CD4-positive, alpha-beta memory T cell (primary cell): ENCODE measurements at regions of chr3 and their contacts with region 1.

Region 1: GRCh38 chr3:31550452-31551251 is 17.9 kb downstream of the STT3B start:
- DNase-seq: peak in 4 of 5 donors; percentile 28 to 40 (median 37)
- H3K4me3 ChIP-seq: no peak overlapping the region
- H3K4me3 Mint-ChIP-seq: peak overlapping the region; percentile 6 to 66 (median 46)
- H3K27ac ChIP-seq: no peak overlapping the region
- H3K27ac Mint-ChIP-seq: peak overlapping the region in 4 of 7 donors; percentile 37 to 85 (median 43)
- H3K4me1 ChIP-seq: peaks cover 84% of the 10 kb centered on the region
- H3K4me1 Mint-ChIP-seq: peaks cover 68 to 93% (median 81%) of the 10 kb centered on the region in 4 donors
- H3K27me3 ChIP-seq: no peaks in the 10 kb centered on the region
- H3K27me3 Mint-ChIP-seq: no peaks in the 10 kb centered on the region

Region 2: GRCh38 chr3:31567036-31567435 is 16.4 kb after region 1 on chr3:
- CTCF ChIA-PET with region 1: interaction called, 4 read pairs
- POLR2A ChIA-PET with region 1: no interaction called
- intact Hi-C with region 1: loop called (anchors 2 kb)
- DNase-seq: peak in 3 of 5 donors; percentile 19 to 43 (median 25)
- H3K4me3 ChIP-seq: no peak overlapping the region
- H3K4me3 Mint-ChIP-seq: peak overlapping the region in 7 of 8 donors; percentile 1 to 72 (median 54)
- H3K27ac ChIP-seq: no peak overlapping the region
- H3K27ac Mint-ChIP-seq: peak overlapping the region in 4 of 7 donors; percentile 11 to 61 (median 38)
- H3K4me1 ChIP-seq: peaks cover 92% of the 10 kb centered on the region
- H3K4me1 Mint-ChIP-seq: peaks cover 72 to 90% (median 83%) of the 10 kb centered on the region in 4 donors
- H3K27me3 ChIP-seq: no peaks in the 10 kb centered on the region
- H3K27me3 Mint-ChIP-seq: no peaks in the 10 kb centered on the region

Region 3: DNA sequence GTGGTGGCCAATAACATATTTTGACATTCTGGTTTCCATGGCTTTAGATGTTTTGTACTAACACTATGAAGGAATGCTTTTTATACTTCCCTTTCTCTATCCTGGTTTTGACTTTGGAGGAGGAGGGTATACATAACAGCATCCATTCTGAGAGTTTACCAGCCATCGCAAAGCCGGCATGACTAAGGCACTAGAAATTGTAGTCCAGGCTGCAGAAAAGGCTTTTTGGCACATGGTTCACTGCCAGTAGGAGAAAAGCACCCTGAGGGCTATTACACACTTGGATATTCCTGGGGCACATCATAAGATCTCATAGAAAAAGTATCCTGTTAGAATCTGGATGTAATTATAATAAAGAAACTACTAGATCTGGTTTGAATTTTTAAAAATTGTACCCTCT is 83.8 kb after region 1 on chr3:
- CTCF ChIA-PET with region 1: no interaction called
- POLR2A ChIA-PET with region 1: no interaction called
- intact Hi-C with region 1: loop called (anchors 5 kb)
- DNase-seq: no peak
- H3K4me3 ChIP-seq: no peak overlapping the region
- H3K4me3 Mint-ChIP-seq: peak overlapping the region in 3 of 8 donors; percentile 30 to 50 (median 50)
- H3K27ac ChIP-seq: no peak overlapping the region
- H3K27ac Mint-ChIP-seq: peak overlapping the region in 6 of 7 donors; percentile 1 to 86 (median 48)
- H3K4me1 ChIP-seq: peaks cover 47% of the 10 kb centered on the region
- H3K4me1 Mint-ChIP-seq: peaks cover 43 to 71% (median 51%) of the 10 kb centered on the region in 4 donors
- H3K27me3 ChIP-seq: no peaks in the 10 kb centered on the region
- H3K27me3 Mint-ChIP-seq: no peaks in the 10 kb centered on the region

Region 4: GRCh38 chr3:31695280-31696008 is 144.8 kb after region 1 on chr3:
- CTCF ChIA-PET with region 1: interaction called, 5 read pairs
- POLR2A ChIA-PET with region 1: no interaction called
- intact Hi-C with region 1: loop called (anchors 2 kb)
- DNase-seq: peak in 4 of 5 donors; percentile 13 to 27 (median 16)
- H3K4me3 ChIP-seq: no peak overlapping the region
- H3K4me3 Mint-ChIP-seq: no peak overlapping the region
- H3K27ac ChIP-seq: no peak overlapping the region
- H3K27ac Mint-ChIP-seq: no peak overlapping the region
- H3K4me1 ChIP-seq: no peaks in the 10 kb centered on the region
- H3K4me1 Mint-ChIP-seq: no peaks in the 10 kb centered on the region
- H3K27me3 ChIP-seq: no peaks in the 10 kb centered on the region
- H3K27me3 Mint-ChIP-seq: no peaks in the 10 kb centered on the region

Region 5: DNA sequence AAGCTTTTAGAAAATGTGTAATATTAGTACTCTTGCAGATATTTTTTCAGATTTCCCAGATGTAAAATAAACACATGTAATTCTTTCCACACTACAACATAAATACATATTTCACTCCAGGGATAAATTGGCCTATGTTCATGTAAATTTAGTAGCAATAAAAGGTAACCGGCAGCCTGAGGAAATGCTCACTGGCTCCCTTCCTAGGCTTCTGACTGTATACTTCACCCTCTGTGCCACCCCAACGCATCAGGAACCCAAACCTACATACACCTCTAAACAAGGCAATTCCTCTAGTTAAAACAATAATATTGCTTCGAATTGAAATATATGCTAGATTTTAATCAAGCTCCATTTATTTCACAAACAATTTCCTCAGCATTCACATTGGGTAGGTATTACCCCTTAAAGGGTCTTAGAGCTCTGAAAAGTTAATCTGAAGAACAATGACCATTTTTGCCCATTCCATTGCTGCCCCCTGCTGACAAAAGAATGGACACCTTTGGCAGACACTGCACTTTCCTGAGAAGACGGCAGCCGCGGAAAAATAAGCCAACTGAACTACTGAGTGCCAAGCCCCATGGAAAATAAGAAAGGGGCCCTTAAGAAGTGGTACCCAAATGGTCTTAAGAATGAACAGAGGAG is 217.9 kb after region 1 on chr3:
- CTCF ChIA-PET with region 1: interaction called, 7 read pairs
- POLR2A ChIA-PET with region 1: no interaction called
- intact Hi-C with region 1: loop called (anchors 1 kb)
- DNase-seq: peak in 4 of 5 donors; percentile 31 to 43 (median 38)
- H3K4me3 ChIP-seq: no peak overlapping the region
- H3K4me3 Mint-ChIP-seq: peak overlapping the region in 1 of 8 donors; percentile 49
- H3K27ac ChIP-seq: no peak overlapping the region
- H3K27ac Mint-ChIP-seq: no peak overlapping the region
- H3K4me1 ChIP-seq: no peaks in the 10 kb centered on the region
- H3K4me1 Mint-ChIP-seq: peaks cover 0 to 2% (median under 1%) of the 10 kb centered on the region in 4 donors
- H3K27me3 ChIP-seq: no peaks in the 10 kb centered on the region
- H3K27me3 Mint-ChIP-seq: peaks cover 0 to 1% of the 10 kb centered on the region in 2 donors

Region 6: GRCh38 chr3:32143849-32144757 is 593.5 kb after region 1 on chr3:
- CTCF ChIA-PET with region 1: no interaction called
- POLR2A ChIA-PET with region 1: no interaction called
- intact Hi-C with region 1: loop called (anchors 10 kb)
- DNase-seq: peak; percentile 46 to 58 (median 56)
- H3K4me3 ChIP-seq: no peak overlapping the region
- H3K4me3 Mint-ChIP-seq: no peak overlapping the region
- H3K27ac ChIP-seq: no peak overlapping the region
- H3K27ac Mint-ChIP-seq: peak overlapping the region in 1 of 7 donors; percentile 3
- H3K4me1 ChIP-seq: no peaks in the 10 kb centered on the region
- H3K4me1 Mint-ChIP-seq: peaks cover 1 to 11% (median 4%) of the 10 kb centered on the region in 4 donors
- H3K27me3 ChIP-seq: no peaks in the 10 kb centered on the region
- H3K27me3 Mint-ChIP-seq: no peaks in the 10 kb centered on the region